ENCODE measurements at regions of chr12 and their contacts with region 1.

Region 1: DNA sequence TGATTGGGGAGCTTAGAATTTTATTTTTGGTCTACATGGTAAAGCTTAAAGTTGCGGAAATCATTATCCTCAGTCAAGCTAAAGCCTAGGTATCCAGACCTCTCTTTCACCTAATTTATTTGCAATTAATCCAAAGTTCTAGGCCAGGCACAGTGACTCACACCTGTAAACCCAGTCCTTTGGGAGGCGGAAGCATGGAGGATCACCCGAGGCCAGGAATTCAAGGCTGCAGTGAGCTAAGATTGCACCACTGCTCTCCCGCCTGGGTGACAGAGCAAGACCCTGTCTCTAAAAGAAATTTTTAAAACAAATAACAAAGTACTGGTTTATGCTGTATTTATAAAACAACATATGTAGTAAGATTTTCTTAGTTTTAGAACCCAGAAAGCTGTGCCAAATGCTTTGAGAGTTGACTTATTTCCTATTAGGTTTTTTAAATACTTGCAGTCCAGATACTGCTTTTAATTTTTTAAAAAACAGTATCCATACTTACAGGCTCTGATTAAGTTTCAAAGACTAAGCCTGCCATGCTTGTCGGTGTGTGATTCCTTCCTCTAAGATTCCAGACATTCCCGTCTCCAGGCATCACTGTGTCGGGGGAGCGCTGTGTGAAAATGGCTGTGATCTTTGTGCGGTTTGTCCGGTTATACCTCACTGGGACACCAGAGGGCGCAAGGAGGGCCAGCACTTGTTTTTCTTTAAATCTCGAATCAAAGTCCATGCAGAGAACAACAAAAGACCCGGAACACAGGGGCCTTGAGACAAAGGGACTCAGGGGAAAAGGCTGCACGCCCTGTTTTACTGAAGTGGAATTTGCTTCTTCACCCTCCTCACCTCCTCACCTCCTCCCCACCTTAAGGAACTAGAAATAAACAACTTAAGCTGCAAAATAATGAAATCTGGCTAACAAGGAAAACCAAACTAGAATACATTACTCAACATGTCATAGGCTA is 24.6 kb upstream of the TMPO start:
- DNase-seq: peak; percentile 89
- H3K4me3 ChIP-seq: no peak overlapping the region
- H3K27ac ChIP-seq: peak overlapping the region; percentile 56
- H3K4me1 ChIP-seq: peaks cover 13% of the 10 kb centered on the region
- CTCF ChIP-seq: peak; percentile 97

Region 2: GRCh38 chr12:98456576-98457573 is 33.9 kb before region 1 on chr12:
- CTCF ChIA-PET with region 1: no interaction called
- POLR2A ChIA-PET with region 1: no interaction called
- intact Hi-C with region 1: no loop called
- DNase-seq: no peak
- H3K4me3 ChIP-seq: no peak overlapping the region
- H3K27ac ChIP-seq: no peak overlapping the region
- H3K4me1 ChIP-seq: no peaks in the 10 kb centered on the region
- CTCF ChIP-seq: no peak

Region 3: GRCh38 chr12:98503592-98504367 is 13.0 kb after region 1 on chr12:
- CTCF ChIA-PET with region 1: interaction called, 5 read pairs
- POLR2A ChIA-PET with region 1: interaction called, 19 read pairs
- intact Hi-C with region 1: loop called (anchors 1 kb)
- DNase-seq: peak; percentile 96
- H3K4me3 ChIP-seq: peak overlapping the region; percentile 69
- H3K27ac ChIP-seq: peak overlapping the region; percentile 95
- H3K4me1 ChIP-seq: peaks cover 17% of the 10 kb centered on the region
- CTCF ChIP-seq: 0 out of 2 replicates have a peak, but pooled peaks have one; percentile 20

Region 4: GRCh38 chr12:98532681-98533304 is 42.0 kb after region 1 on chr12:
- CTCF ChIA-PET with region 1: no interaction called
- POLR2A ChIA-PET with region 1: interaction called, 3 read pairs
- intact Hi-C with region 1: loop called (anchors 5 kb)
- DNase-seq: peak; percentile 63
- H3K4me3 ChIP-seq: no peak overlapping the region
- H3K27ac ChIP-seq: no peak overlapping the region
- H3K4me1 ChIP-seq: no peaks in the 10 kb centered on the region
- CTCF ChIP-seq: peak; percentile 86

Measured in OCI-LY7 (cell line).